Caco-2 (cell line): ENCODE measurements at regions of chr10 and their contacts with region 1.

Region 1: GRCh38 chr10:98045785-98046389 is 15.5 kb upstream of the CRTAC1 start:
- DNase-seq: peak; percentile 60 to 72
- H3K4me3 ChIP-seq: no peak overlapping the region
- H3K4me3 Mint-ChIP-seq: no peak overlapping the region
- H3K27ac Mint-ChIP-seq: no peak overlapping the region
- H3K4me1 ChIP-seq: no peaks in the 10 kb centered on the region
- H3K4me1 Mint-ChIP-seq: no peaks in the 10 kb centered on the region
- H3K27me3 ChIP-seq: no peaks in the 10 kb centered on the region; the same call in 1 of the 2 replicates
- H3K27me3 Mint-ChIP-seq: peaks cover 13% of the 10 kb centered on the region
- CTCF ChIP-seq: peak; percentile 90 to 92

Region 2: DNA sequence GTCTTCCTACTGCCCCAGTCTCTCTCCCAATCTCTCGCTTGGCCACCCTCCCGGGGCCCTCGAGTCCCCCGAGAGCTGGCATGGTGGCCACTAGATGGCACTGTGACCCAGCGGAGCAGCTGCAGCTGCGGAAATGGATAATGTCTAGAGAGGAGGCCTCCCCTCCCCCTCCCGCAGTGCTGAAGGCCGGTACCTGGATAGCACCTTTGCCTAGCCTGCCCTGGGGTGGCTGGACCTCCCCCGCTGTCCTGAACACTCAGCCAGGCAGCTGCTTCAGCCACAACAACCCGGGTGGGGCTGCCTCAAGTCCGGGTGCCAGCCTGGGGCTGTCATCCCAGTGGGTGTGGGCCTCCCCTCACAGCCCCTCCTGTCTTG is 131.1 kb before region 1 on chr10:
- CTCF ChIA-PET with region 1: interaction called, 58 read pairs
- POLR2A ChIA-PET with region 1: no interaction called
- intact Hi-C with region 1: loop called (anchors 1 kb)
- DNase-seq: peak; percentile 80 to 85
- H3K4me3 ChIP-seq: no peak overlapping the region
- H3K4me3 Mint-ChIP-seq: no peak overlapping the region
- H3K27ac Mint-ChIP-seq: no peak overlapping the region
- H3K4me1 ChIP-seq: no peaks in the 10 kb centered on the region
- H3K4me1 Mint-ChIP-seq: no peaks in the 10 kb centered on the region
- H3K27me3 ChIP-seq: peaks cover 1% of the 10 kb centered on the region; the same call in 1 of the 2 replicates
- H3K27me3 Mint-ChIP-seq: peaks cover 23% of the 10 kb centered on the region
- CTCF ChIP-seq: peak; percentile 94 to 96

Region 3: GRCh38 chr10:97991871-97992270 is 54.0 kb before region 1 on chr10:
- CTCF ChIA-PET with region 1: no interaction called
- POLR2A ChIA-PET with region 1: no interaction called
- intact Hi-C with region 1: no loop called
- DNase-seq: peak; percentile 41 to 62
- H3K4me3 ChIP-seq: no peak overlapping the region
- H3K4me3 Mint-ChIP-seq: no peak overlapping the region
- H3K27ac Mint-ChIP-seq: no peak overlapping the region
- H3K4me1 ChIP-seq: no peaks in the 10 kb centered on the region
- H3K4me1 Mint-ChIP-seq: no peaks in the 10 kb centered on the region
- H3K27me3 ChIP-seq: no peaks in the 10 kb centered on the region
- H3K27me3 Mint-ChIP-seq: peaks cover 15% of the 10 kb centered on the region
- CTCF ChIP-seq: no peak